Dendritic cell treated with granulocyte-macrophage colony-stimulating factor and Interleukin-4, amounts not matched to agents 40 ng/mL and 50 ng/mL, for 4 days (primary cell): ENCODE measurements at regions of chr14 and their contacts with region 1.

Region 1: DNA sequence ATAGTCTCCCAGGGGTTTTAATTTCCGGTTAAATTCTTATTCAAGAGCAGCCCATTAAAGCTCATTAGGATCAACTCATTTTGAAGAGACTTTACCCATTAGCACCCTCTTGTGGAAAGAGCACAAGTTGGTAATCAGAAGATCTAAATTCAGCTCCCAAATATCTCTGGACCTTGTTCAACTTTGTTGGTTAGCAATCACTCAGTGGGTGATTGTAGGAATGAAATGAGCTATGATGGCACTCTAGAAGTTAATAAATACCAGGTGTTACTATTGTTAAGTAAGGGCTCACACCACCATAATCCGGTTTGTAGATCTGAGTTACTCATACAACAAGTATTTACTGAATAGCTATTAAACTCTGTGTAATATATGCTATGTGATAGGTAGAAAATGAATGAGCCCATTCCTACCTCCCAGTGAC is 42.9 kb downstream of the TRIP11 start:
- H3K4me3 Mint-ChIP-seq: no peak overlapping the region
- H3K27ac Mint-ChIP-seq: no peak overlapping the region
- H3K4me1 Mint-ChIP-seq: peaks cover 13% of the 10 kb centered on the region
- H3K27me3 Mint-ChIP-seq: no peaks in the 10 kb centered on the region

Region 2: GRCh38 chr14:91429385-91429784 is 567.6 kb before region 1 on chr14:
- intact Hi-C with region 1: no loop called
- H3K4me3 Mint-ChIP-seq: no peak overlapping the region
- H3K27ac Mint-ChIP-seq: no peak overlapping the region
- H3K4me1 Mint-ChIP-seq: peaks cover 5% of the 10 kb centered on the region
- H3K27me3 Mint-ChIP-seq: no peaks in the 10 kb centered on the region

Region 3: GRCh38 chr14:91470216-91470615 is 526.7 kb before region 1 on chr14:
- intact Hi-C with region 1: loop called (anchors 10 kb)
- H3K4me3 Mint-ChIP-seq: no peak overlapping the region
- H3K27ac Mint-ChIP-seq: no peak overlapping the region
- H3K4me1 Mint-ChIP-seq: no peaks in the 10 kb centered on the region
- H3K27me3 Mint-ChIP-seq: no peaks in the 10 kb centered on the region

Region 4: GRCh38 chr14:91649930-91650329 is 347.0 kb before region 1 on chr14:
- intact Hi-C with region 1: loop called (anchors 5 kb)
- H3K4me3 Mint-ChIP-seq: no peak overlapping the region
- H3K27ac Mint-ChIP-seq: no peak overlapping the region
- H3K4me1 Mint-ChIP-seq: peaks cover 5% of the 10 kb centered on the region
- H3K27me3 Mint-ChIP-seq: peaks cover 4% of the 10 kb centered on the region

Region 5: DNA sequence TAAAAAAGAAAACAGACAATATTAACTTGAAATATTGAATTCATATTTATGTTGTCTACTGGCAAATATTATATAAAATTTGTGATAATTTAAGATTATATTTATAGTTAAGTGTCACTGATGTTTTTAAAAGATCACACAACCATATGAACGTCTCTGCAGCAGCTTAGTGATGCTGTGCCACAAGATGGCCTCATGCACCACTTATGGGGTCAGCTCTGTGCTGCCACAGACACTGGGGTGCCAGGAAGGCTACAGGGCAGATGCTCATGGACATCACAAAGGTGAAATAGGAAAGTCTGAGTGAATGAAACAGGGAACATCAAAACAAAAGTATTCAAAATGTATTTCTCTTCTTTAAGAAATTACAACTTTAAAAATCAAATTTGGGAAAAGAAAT is 96.4 kb after region 1 on chr14:
- intact Hi-C with region 1: no loop called
- H3K4me3 Mint-ChIP-seq: no peak overlapping the region
- H3K27ac Mint-ChIP-seq: no peak overlapping the region
- H3K4me1 Mint-ChIP-seq: no peaks in the 10 kb centered on the region
- H3K27me3 Mint-ChIP-seq: no peaks in the 10 kb centered on the region